ENCODE measurements at regions of chr7 and their contacts with region 1.

Region 1: GRCh38 chr7:87416682-87417587 is 58.5 kb downstream of the ABCB4 start:
- DNase-seq: peak; percentile 32 to 82 (median 60)
- ATAC-seq: peak; percentile 63
- H3K4me3 ChIP-seq: no peak overlapping the region
- H3K4me3 Mint-ChIP-seq: no peak overlapping the region
- H3K27ac ChIP-seq: no peak overlapping the region
- H3K27ac Mint-ChIP-seq: no peak overlapping the region
- H3K4me1 ChIP-seq: no peaks in the 10 kb centered on the region
- H3K4me1 Mint-ChIP-seq: no peaks in the 10 kb centered on the region
- H3K27me3 ChIP-seq: no peaks in the 10 kb centered on the region
- H3K27me3 Mint-ChIP-seq: no peaks in the 10 kb centered on the region
- CTCF ChIP-seq: peak; percentile 76

Region 2: DNA sequence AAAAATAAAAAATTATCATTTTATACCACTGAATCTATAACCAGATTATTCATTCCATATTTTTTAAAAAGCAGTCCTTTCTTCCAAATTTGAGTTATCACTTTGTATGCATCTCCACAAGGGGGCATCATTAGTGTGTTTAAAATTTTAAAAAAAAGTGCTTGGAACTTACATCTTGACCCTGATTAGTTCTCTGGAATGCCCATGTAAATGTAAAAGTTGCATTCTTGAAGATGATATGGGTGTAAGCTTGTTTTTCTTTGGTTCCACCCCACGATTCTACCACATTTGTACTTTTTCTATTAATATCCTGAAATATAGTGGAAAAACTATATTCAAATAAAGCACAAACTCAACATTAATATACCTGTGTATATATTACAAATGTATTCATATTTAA is 502.4 kb before region 1 on chr7:
- CTCF ChIA-PET with region 1: no interaction called
- POLR2A ChIA-PET with region 1: no interaction called
- intact Hi-C with region 1: loop called in 1 of 2 experiments (anchors 5 kb)
- DNase-seq: peak in 3 of 14 experiments; percentile 11 to 27 (median 16)
- ATAC-seq: no peak
- H3K4me3 ChIP-seq: no peak overlapping the region
- H3K4me3 Mint-ChIP-seq: no peak overlapping the region
- H3K27ac ChIP-seq: no peak overlapping the region
- H3K27ac Mint-ChIP-seq: no peak overlapping the region
- H3K4me1 ChIP-seq: no peaks in the 10 kb centered on the region
- H3K4me1 Mint-ChIP-seq: no peaks in the 10 kb centered on the region
- H3K27me3 ChIP-seq: no peaks in the 10 kb centered on the region
- H3K27me3 Mint-ChIP-seq: peaks cover 9% of the 10 kb centered on the region
- CTCF ChIP-seq: peak; percentile 56

Region 3: DNA sequence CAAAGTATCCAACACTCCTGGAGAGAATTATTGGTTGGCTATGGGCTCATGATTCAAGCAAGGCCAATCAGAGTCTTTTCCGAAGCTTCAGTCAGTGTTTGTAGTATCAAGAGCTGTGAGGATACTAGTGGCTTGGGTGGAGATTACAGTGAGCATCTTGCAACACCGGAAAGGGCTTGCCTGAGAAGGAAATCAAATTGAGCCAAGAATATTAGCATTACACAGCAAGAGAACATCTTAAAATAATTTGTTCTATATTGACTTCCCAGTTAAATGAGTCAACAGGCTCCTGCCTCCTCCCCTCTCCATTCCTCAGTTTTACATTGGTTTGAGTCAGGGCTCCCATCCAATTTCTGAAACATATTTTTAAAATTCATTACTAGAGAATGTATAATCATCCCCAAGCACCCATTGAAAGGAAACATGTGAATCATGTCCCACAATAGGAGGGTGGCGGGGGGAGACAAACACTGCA is 484.9 kb before region 1 on chr7:
- CTCF ChIA-PET with region 1: no interaction called
- POLR2A ChIA-PET with region 1: no interaction called
- intact Hi-C with region 1: loop called (anchors 5 kb)
- DNase-seq: no peak
- ATAC-seq: no peak
- H3K4me3 ChIP-seq: no peak overlapping the region
- H3K4me3 Mint-ChIP-seq: no peak overlapping the region
- H3K27ac ChIP-seq: no peak overlapping the region
- H3K27ac Mint-ChIP-seq: no peak overlapping the region
- H3K4me1 ChIP-seq: no peaks in the 10 kb centered on the region
- H3K4me1 Mint-ChIP-seq: no peaks in the 10 kb centered on the region
- H3K27me3 ChIP-seq: no peaks in the 10 kb centered on the region
- H3K27me3 Mint-ChIP-seq: peaks cover 5% of the 10 kb centered on the region
- CTCF ChIP-seq: no peak

Region 4: GRCh38 chr7:87312215-87312865 is 104.6 kb before region 1 on chr7:
- CTCF ChIA-PET with region 1: interaction called, 52 read pairs
- POLR2A ChIA-PET with region 1: interaction called, 5 read pairs
- intact Hi-C with region 1: loop called (anchors 1 kb)
- DNase-seq: peak; percentile 37 to 82 (median 54)
- ATAC-seq: peak; percentile 92
- H3K4me3 ChIP-seq: no peak overlapping the region
- H3K4me3 Mint-ChIP-seq: no peak overlapping the region
- H3K27ac ChIP-seq: no peak overlapping the region
- H3K27ac Mint-ChIP-seq: no peak overlapping the region
- H3K4me1 ChIP-seq: peaks cover 5% of the 10 kb centered on the region
- H3K4me1 Mint-ChIP-seq: peaks cover 8% of the 10 kb centered on the region
- H3K27me3 ChIP-seq: no peaks in the 10 kb centered on the region
- H3K27me3 Mint-ChIP-seq: no peaks in the 10 kb centered on the region
- CTCF ChIP-seq: peak; percentile 95

Region 5: GRCh38 chr7:87339373-87339897 is 77.5 kb before region 1 on chr7:
- CTCF ChIA-PET with region 1: no interaction called
- POLR2A ChIA-PET with region 1: no interaction called
- intact Hi-C with region 1: no loop called
- DNase-seq: no peak
- ATAC-seq: no peak
- H3K4me3 ChIP-seq: no peak overlapping the region
- H3K4me3 Mint-ChIP-seq: no peak overlapping the region
- H3K27ac ChIP-seq: no peak overlapping the region
- H3K27ac Mint-ChIP-seq: no peak overlapping the region
- H3K4me1 ChIP-seq: peaks cover 9% of the 10 kb centered on the region
- H3K4me1 Mint-ChIP-seq: peaks cover 31% of the 10 kb centered on the region
- H3K27me3 ChIP-seq: no peaks in the 10 kb centered on the region
- H3K27me3 Mint-ChIP-seq: no peaks in the 10 kb centered on the region
- CTCF ChIP-seq: no peak

Measured in CD4-positive, alpha-beta T cell (primary cell).